K562 (cell line): ENCODE measurements at regions of chrX and their contacts with region 1.

Region 1: GRCh38 chrX:155094468-155095061 is 23.3 kb downstream of the BRCC3 start:
- DNase-seq: peak; percentile 26 to 47 (median 30)
- ATAC-seq: peak; percentile 84
- H3K4me3 ChIP-seq: no peak overlapping the region
- H3K27ac ChIP-seq: no peak overlapping the region
- H3K4me1 ChIP-seq: no peaks in the 10 kb centered on the region
- H3K27me3 ChIP-seq: no peaks in the 10 kb centered on the region
- CTCF ChIP-seq: peak; percentile 54 to 61 (median 56)
- EP300 ChIP-seq: no peak
- POLR2A ChIP-seq: no peak
- RAD21 ChIP-seq: peak; percentile 35 to 62; a peak in 3 of 4 replicates

Region 2: GRCh38 chrX:155179346-155179986 is 84.9 kb after region 1 on chrX:
- CTCF ChIA-PET with region 1: no interaction called
- POLR2A ChIA-PET with region 1: no interaction called
- in situ Hi-C with region 1: no loop called
- intact Hi-C with region 1: loop called (anchors 2 kb)
- DNase-seq: peak in 2 of 4 experiments; percentile 10 to 28
- ATAC-seq: peak; percentile 60
- H3K4me3 ChIP-seq: no peak overlapping the region
- H3K27ac ChIP-seq: no peak overlapping the region
- H3K4me1 ChIP-seq: no peaks in the 10 kb centered on the region
- H3K27me3 ChIP-seq: no peaks in the 10 kb centered on the region
- CTCF ChIP-seq: peak; percentile 40 to 72 (median 46); a peak in 5 of 6 replicates
- EP300 ChIP-seq: no peak
- POLR2A ChIP-seq: no peak
- RAD21 ChIP-seq: peak; percentile 68 to 71